HepG2 (cell line): ENCODE measurements at regions of chr3 and their contacts with region 1.

Region 1: GRCh38 chr3:42129014-42129953 is 38.1 kb downstream of the TRAK1 start:
- DNase-seq: peak; percentile 47
- ATAC-seq: no peak
- H3K4me3 ChIP-seq: no peak overlapping the region; a peak in 1 of 6 replicates
- H3K27ac ChIP-seq: peak overlapping the region; percentile 96
- H3K4me1 ChIP-seq: peaks cover 82% of the 10 kb centered on the region
- H3K27me3 ChIP-seq: no peaks in the 10 kb centered on the region
- CTCF ChIP-seq: no peak
- EP300 ChIP-seq: no peak
- POLR2A ChIP-seq: no peak
- RAD21 ChIP-seq: no peak

Region 2: GRCh38 chr3:41836360-41837134 is 292.7 kb before region 1 on chr3:
- CTCF ChIA-PET with region 1: no interaction called
- POLR2A ChIA-PET with region 1: no interaction called
- in situ Hi-C with region 1: no loop called
- intact Hi-C with region 1: no loop called
- DNase-seq: no peak
- ATAC-seq: no peak
- H3K4me3 ChIP-seq: no peak overlapping the region
- H3K27ac ChIP-seq: no peak overlapping the region
- H3K4me1 ChIP-seq: no peaks in the 10 kb centered on the region
- H3K27me3 ChIP-seq: no peaks in the 10 kb centered on the region
- CTCF ChIP-seq: no peak
- EP300 ChIP-seq: no peak
- POLR2A ChIP-seq: no peak
- RAD21 ChIP-seq: no peak

Region 3: GRCh38 chr3:42014921-42015533 is 114.3 kb before region 1 on chr3:
- CTCF ChIA-PET with region 1: no interaction called
- POLR2A ChIA-PET with region 1: no interaction called
- in situ Hi-C with region 1: no loop called
- intact Hi-C with region 1: no loop called
- DNase-seq: peak; percentile 85
- ATAC-seq: peak; percentile 85
- H3K4me3 ChIP-seq: peak overlapping the region; percentile 66 to 90 (median 85)
- H3K27ac ChIP-seq: peak overlapping the region; percentile 64
- H3K4me1 ChIP-seq: peaks cover 61% of the 10 kb centered on the region
- H3K27me3 ChIP-seq: no peaks in the 10 kb centered on the region
- CTCF ChIP-seq: peak; percentile 36
- EP300 ChIP-seq: no peak; a peak in 1 of 4 replicates
- POLR2A ChIP-seq: peak; percentile 49 to 71; a peak in 3 of 4 replicates
- RAD21 ChIP-seq: peak; percentile 11; the same call in 1 of the 2 replicates

Region 4: GRCh38 chr3:42094128-42094527 is 35.2 kb before region 1 on chr3:
- CTCF ChIA-PET with region 1: no interaction called
- POLR2A ChIA-PET with region 1: no interaction called
- in situ Hi-C with region 1: no loop called
- intact Hi-C with region 1: no loop called
- DNase-seq: no peak
- ATAC-seq: no peak
- H3K4me3 ChIP-seq: no peak overlapping the region
- H3K27ac ChIP-seq: no peak overlapping the region
- H3K4me1 ChIP-seq: no peaks in the 10 kb centered on the region
- H3K27me3 ChIP-seq: no peaks in the 10 kb centered on the region
- CTCF ChIP-seq: no peak
- EP300 ChIP-seq: no peak
- POLR2A ChIP-seq: no peak
- RAD21 ChIP-seq: no peak

Region 5: DNA sequence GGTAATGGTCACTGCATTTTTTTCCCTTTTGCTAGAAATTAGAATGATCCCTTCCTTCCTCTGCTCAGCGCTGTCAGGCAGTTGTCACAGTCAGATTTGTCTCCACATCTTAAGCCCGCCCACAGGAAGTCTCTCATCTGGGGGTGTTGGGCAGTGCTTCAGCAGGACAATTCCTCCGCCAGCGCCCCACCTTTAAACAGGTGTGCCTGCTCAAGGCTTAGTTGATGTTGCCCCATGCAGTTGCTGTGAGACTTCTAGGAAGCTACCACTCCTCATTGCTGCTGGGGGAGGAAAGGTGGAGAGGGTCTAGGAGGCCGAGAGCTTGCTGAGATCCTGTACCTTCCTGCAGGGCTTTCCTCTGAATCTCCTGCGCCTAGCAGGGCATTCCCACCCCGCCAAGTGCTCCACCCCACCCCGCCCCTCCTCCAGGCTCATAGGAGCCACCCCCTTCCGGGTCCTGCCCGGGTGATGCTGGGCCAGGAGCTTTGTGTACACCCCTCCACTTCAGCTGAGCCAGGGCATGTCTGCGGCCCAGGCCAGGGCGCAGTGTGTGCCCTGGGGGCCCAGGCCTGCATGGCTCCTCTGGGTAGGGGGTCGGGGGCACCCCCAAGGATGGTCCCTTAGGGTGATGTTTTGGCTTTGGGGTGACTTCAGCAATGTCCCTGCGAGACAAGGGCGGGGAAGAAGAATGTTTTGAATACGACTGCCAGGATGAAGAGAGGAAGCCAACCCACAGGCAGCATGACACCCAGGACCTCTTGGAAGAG is 30.6 kb after region 1 on chr3:
- CTCF ChIA-PET with region 1: no interaction called
- POLR2A ChIA-PET with region 1: interaction called, 80 read pairs
- in situ Hi-C with region 1: loop called (anchors 5 kb)
- intact Hi-C with region 1: no loop called
- DNase-seq: peak; percentile 77
- ATAC-seq: peak; percentile 98
- H3K4me3 ChIP-seq: peak overlapping the region; percentile 57 to 81 (median 65)
- H3K27ac ChIP-seq: peak overlapping the region; percentile 70
- H3K4me1 ChIP-seq: peaks cover 55% of the 10 kb centered on the region
- H3K27me3 ChIP-seq: no peaks in the 10 kb centered on the region; a peak in 1 of 5 replicates
- CTCF ChIP-seq: no peak
- EP300 ChIP-seq: no peak
- POLR2A ChIP-seq: peak; percentile 33 to 64; a peak in 3 of 4 replicates
- RAD21 ChIP-seq: no peak

Region 6: DNA sequence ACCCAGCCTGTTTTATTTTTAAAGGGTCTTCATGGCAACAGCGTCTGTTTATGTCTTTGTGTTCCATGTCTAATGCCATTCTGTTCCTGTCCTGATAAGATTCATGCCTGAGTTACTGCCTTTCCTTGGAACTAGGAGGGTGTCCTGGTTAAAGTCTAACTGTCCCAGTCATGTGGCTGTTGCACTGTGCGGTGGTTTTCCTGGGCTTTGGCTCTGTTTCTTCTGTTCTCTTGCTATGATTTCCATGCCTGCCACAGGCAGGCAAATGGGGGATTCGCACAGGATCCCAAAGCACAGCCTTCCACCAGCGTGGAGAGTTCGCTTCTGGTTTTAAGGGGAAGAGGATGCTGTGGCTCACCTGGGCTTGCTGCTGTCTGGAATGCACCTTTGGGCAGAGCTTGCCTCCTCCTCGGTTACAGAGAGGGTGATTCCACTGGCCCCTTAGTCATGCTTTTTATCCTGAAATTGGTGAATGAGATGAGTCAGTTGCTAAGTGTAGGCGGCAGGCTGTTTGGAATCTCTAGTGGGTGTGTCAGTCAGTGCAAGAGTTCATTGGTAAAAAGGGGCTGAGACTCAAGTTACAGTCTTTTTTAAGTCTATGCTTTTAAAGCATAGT is 49.9 kb after region 1 on chr3:
- CTCF ChIA-PET with region 1: no interaction called
- POLR2A ChIA-PET with region 1: interaction called, 6 read pairs
- in situ Hi-C with region 1: no loop called
- intact Hi-C with region 1: loop called (anchors 1 kb)
- DNase-seq: peak; percentile 83
- ATAC-seq: peak; percentile 92
- H3K4me3 ChIP-seq: peak overlapping the region in 1 of 3 experiments; percentile 29; a peak in 2 of 6 replicates
- H3K27ac ChIP-seq: peak overlapping the region; percentile 83
- H3K4me1 ChIP-seq: peaks cover 65% of the 10 kb centered on the region
- H3K27me3 ChIP-seq: no peaks in the 10 kb centered on the region
- CTCF ChIP-seq: no peak
- EP300 ChIP-seq: peak in 1 of 2 experiments; percentile 3; a peak in 1 of 4 replicates
- POLR2A ChIP-seq: no peak
- RAD21 ChIP-seq: 0 out of 2 replicates have a peak, but pooled peaks have one; percentile 13

Region 7: DNA sequence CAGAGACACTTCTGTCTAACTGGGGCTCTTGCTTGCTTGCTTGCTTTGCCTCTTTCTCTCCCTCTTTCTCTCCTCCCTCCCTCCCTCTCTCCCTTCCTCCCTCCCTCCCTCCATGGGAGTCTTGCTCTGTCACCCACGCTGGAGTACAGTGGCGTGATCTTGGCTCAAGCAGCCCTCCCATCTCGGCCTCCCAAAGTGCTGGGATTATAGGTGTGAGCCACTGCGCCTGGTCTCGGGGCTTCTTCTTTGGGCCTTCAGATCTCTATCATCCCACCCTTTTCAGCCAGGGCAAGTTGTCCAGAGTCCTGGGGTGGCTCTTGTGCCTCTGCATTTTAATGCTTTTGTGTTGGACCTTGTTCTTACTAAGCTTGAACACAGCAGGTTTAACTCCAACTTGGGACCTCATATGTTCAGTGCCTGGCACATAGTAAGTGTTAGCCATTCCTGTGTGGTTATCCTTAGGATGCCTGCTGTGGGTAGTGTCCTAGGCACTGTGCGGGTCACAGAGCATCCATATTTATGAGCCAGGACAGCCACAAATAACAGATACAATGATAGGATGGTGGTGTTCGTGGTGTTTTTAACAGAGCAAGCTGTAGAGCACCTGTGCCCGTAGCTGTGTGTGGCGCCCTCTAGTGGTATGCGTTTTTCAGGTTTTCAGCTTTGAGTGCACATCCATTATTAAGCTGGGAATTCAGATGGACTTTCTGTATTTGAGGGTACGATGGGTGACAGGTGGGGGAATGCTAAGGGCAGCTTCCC is 61.6 kb after region 1 on chr3:
- CTCF ChIA-PET with region 1: no interaction called
- POLR2A ChIA-PET with region 1: interaction called, 22 read pairs
- in situ Hi-C with region 1: no loop called
- intact Hi-C with region 1: no loop called
- DNase-seq: peak; percentile 55
- ATAC-seq: peak; percentile 90
- H3K4me3 ChIP-seq: no peak overlapping the region
- H3K27ac ChIP-seq: no peak overlapping the region
- H3K4me1 ChIP-seq: no peaks in the 10 kb centered on the region
- H3K27me3 ChIP-seq: no peaks in the 10 kb centered on the region
- CTCF ChIP-seq: peak; percentile 90
- EP300 ChIP-seq: no peak
- POLR2A ChIP-seq: no peak
- RAD21 ChIP-seq: peak; percentile 88